Naive thymus-derived CD4-positive, alpha-beta T cell (primary cell): ENCODE measurements at regions of chr17 and their contacts with region 1.

Region 1: GRCh38 chr17:30291543-30292285 is at the start of gene BLMH:
- DNase-seq: peak; percentile 58 to 89 (median 66)
- ATAC-seq: peak; percentile 90
- H3K4me3 ChIP-seq: peak within 1 kb of the TSS; percentile 77
- H3K4me3 Mint-ChIP-seq: peak within 1 kb of the TSS in 8 of 10 donors; percentile 92 to 97 (median 94)
- H3K27ac ChIP-seq: peak within 1 kb of the TSS; percentile 63
- H3K27ac Mint-ChIP-seq: peak within 1 kb of the TSS; percentile 44 to 91 (median 85)
- H3K4me1 ChIP-seq: peaks cover 9% of the 10 kb centered on the region in 2 donors
- H3K4me1 Mint-ChIP-seq: peaks cover 5 to 22% (median 19%) of the 10 kb centered on the region in 7 donors
- H3K27me3 ChIP-seq: no peaks in the 10 kb centered on the region
- H3K27me3 Mint-ChIP-seq: no peaks in the 10 kb centered on the region
- total RNA-seq, gene BLMH: 26.8 to 57.5 (median 40.1) TPM

Region 2: DNA sequence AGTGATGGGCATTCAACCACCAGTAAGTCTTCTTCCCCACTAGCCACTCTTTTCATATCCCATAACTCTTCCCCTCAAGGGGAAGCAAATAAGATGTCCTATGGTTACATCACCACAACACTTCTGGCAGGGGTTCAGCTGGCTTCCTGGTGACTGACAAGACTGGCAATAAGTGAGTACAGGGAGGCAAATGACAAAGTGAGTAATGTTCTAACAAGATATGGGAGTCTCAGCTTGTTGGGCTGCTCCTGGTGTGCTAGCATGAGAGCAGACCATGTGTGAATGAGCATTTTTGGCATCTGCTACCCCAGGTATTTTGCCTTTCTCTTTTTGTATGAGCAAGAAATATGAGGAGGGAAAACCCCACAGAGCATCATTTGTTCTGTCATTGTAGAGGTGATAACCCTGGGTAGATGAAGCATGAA is 32.2 kb after region 1 on chr17:
- CTCF ChIA-PET with region 1: interaction called, 7 read pairs
- POLR2A ChIA-PET with region 1: interaction called, 29 read pairs
- intact Hi-C with region 1: no loop called
- DNase-seq: peak in 5 of 9 donors; percentile 28 to 46 (median 38)
- ATAC-seq: peak; percentile 64
- H3K4me3 ChIP-seq: peak overlapping the region; percentile 14
- H3K4me3 Mint-ChIP-seq: peak overlapping the region in 9 of 10 donors; percentile 26 to 67 (median 62)
- H3K27ac ChIP-seq: peak overlapping the region; percentile 60
- H3K27ac Mint-ChIP-seq: peak overlapping the region; percentile 2 to 95 (median 88)
- H3K4me1 ChIP-seq: peaks cover 24 to 32% of the 10 kb centered on the region in 2 donors
- H3K4me1 Mint-ChIP-seq: peaks cover 15 to 46% (median 32%) of the 10 kb centered on the region in 7 donors
- H3K27me3 ChIP-seq: no peaks in the 10 kb centered on the region
- H3K27me3 Mint-ChIP-seq: peaks cover 0 to 7% (median 0%) of the 10 kb centered on the region in 5 donors

Region 3: GRCh38 chr17:30378824-30379302 is 87.1 kb after region 1 on chr17 and contains the start of gene CPD:
- CTCF ChIA-PET with region 1: no interaction called
- POLR2A ChIA-PET with region 1: no interaction called
- intact Hi-C with region 1: loop called in 1 of 2 experiments (anchors 5 kb)
- DNase-seq: peak; percentile 93 to 99 (median 97)
- ATAC-seq: peak; percentile 98
- H3K4me3 ChIP-seq: peak within 1 kb of the TSS; percentile 76
- H3K4me3 Mint-ChIP-seq: peak within 1 kb of the TSS; percentile 90 to 99 (median 94)
- H3K27ac ChIP-seq: peak within 1 kb of the TSS; percentile 81
- H3K27ac Mint-ChIP-seq: peak within 1 kb of the TSS; percentile 89 to 98 (median 94)
- H3K4me1 ChIP-seq: peaks cover 20 to 50% of the 10 kb centered on the region in 2 donors
- H3K4me1 Mint-ChIP-seq: peaks cover 36 to 65% (median 55%) of the 10 kb centered on the region in 7 donors
- H3K27me3 ChIP-seq: no peaks in the 10 kb centered on the region
- H3K27me3 Mint-ChIP-seq: no peaks in the 10 kb centered on the region
- total RNA-seq, gene CPD: 16.5 to 52.9 (median 22.6) TPM

Region 4: DNA sequence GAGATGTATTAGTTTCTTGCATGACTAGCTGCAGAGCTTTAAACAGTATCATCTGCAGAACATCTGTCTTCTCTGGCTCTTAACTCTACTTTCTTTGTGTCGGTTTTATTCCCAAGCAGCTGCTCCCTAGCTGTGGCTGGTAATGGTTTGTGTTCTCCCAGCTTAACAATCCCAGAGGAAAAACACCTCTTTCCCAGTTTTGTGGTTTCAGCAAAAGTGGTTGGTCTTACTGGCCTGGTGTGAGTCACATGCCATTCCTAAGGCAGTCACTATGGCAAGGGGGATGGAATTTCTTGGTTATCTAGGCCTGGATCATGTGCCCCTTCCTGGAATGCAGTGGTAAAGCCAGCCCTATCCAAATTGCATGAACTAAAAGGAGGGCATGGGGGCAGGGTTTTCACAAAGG is 977.9 kb after region 1 on chr17:
- CTCF ChIA-PET with region 1: no interaction called
- POLR2A ChIA-PET with region 1: no interaction called
- intact Hi-C with region 1: no loop called
- DNase-seq: no peak
- ATAC-seq: no peak
- H3K4me3 ChIP-seq: no peak overlapping the region
- H3K4me3 Mint-ChIP-seq: no peak overlapping the region
- H3K27ac ChIP-seq: no peak overlapping the region
- H3K27ac Mint-ChIP-seq: no peak overlapping the region
- H3K4me1 ChIP-seq: no peaks in the 10 kb centered on the region
- H3K4me1 Mint-ChIP-seq: peaks cover 0 to 9% (median 5%) of the 10 kb centered on the region in 7 donors
- H3K27me3 ChIP-seq: no peaks in the 10 kb centered on the region
- H3K27me3 Mint-ChIP-seq: no peaks in the 10 kb centered on the region